Activated B cell treated with CpG ODN at 0.5 μM for 24 hours (primary cell): ENCODE measurements at regions of chr14 and their contacts with region 1.

Region 1: GRCh38 chr14:106622200-106622745 is 1095.9 kb downstream of the TMEM121 start:
- DNase-seq: no peak
- ATAC-seq: no peak
- H3K4me3 Mint-ChIP-seq: no peak overlapping the region
- H3K27ac Mint-ChIP-seq: no peak overlapping the region
- H3K4me1 Mint-ChIP-seq: peaks cover 9% of the 10 kb centered on the region
- H3K27me3 Mint-ChIP-seq: peaks cover 26% of the 10 kb centered on the region
- CTCF ChIP-seq: no peak

Region 2: DNA sequence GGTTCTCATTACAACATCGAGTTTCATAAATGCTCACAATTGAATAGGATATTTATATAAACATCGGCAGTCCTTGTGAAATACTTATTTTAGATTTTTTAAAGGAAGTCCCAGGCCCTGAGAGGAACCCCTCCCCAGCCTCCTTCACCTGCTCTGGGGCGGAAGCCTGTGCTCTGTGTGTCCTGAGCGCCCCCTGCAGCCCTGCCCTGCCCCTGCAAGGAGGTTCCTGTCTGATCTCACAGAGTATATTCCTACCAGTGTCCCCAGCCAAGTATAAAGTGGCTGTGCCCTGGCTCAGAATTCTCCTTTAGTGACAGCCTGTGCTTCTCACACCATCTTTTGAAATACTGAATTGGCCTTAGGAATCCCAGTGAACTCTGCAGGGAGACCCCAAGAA is 436.4 kb before region 1 on chr14:
- CTCF ChIA-PET with region 1: no interaction called
- POLR2A ChIA-PET with region 1: no interaction called
- intact Hi-C with region 1: no loop called
- DNase-seq: no peak
- ATAC-seq: peak; percentile 60
- H3K4me3 Mint-ChIP-seq: no peak overlapping the region
- H3K27ac Mint-ChIP-seq: no peak overlapping the region
- H3K4me1 Mint-ChIP-seq: peaks cover 5% of the 10 kb centered on the region
- H3K27me3 Mint-ChIP-seq: peaks cover 7% of the 10 kb centered on the region
- CTCF ChIP-seq: no peak

Region 3: DNA sequence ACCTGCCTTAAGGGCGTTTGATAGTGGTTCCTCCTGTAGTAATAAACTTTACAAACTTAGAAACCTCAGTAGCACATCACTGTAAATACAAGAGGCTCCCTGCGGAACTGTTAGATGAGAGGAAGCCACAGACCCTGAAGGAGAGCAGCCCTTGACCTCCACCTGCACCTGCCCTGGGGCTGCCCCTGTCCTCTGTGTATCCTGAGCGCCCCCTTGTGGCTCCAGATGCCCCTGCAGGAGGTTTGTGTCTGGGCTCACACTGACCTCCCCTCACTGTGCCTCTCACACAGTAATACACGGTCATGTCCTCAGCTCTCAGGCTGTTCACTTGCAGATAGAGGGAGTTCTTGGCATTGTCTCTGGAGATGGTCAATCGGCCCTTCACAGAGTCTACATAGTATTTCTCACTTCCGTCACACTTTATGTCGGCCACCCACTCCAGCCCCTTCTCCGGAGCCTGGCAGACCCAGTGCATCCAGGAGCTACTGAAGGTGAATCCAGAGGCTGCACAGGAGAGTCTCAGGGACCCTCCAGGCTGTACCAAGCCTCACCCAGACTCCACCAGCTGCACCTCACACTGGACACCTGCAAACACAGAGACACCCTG is 36.1 kb before region 1 on chr14:
- CTCF ChIA-PET with region 1: interaction called, 5 read pairs
- POLR2A ChIA-PET with region 1: no interaction called
- intact Hi-C with region 1: loop called (anchors 5 kb)
- DNase-seq: peak; percentile 60
- ATAC-seq: peak; percentile 95
- H3K4me3 Mint-ChIP-seq: no peak overlapping the region
- H3K27ac Mint-ChIP-seq: no peak overlapping the region
- H3K4me1 Mint-ChIP-seq: peaks cover 36% of the 10 kb centered on the region
- H3K27me3 Mint-ChIP-seq: no peaks in the 10 kb centered on the region
- CTCF ChIP-seq: no peak

Region 4: GRCh38 chr14:106605548-106606448 is 16.5 kb before region 1 on chr14:
- CTCF ChIA-PET with region 1: interaction called, 10 read pairs
- POLR2A ChIA-PET with region 1: no interaction called
- intact Hi-C with region 1: no loop called
- DNase-seq: peak; percentile 79
- ATAC-seq: peak; percentile 100
- H3K4me3 Mint-ChIP-seq: no peak overlapping the region
- H3K27ac Mint-ChIP-seq: no peak overlapping the region
- H3K4me1 Mint-ChIP-seq: peaks cover 6% of the 10 kb centered on the region
- H3K27me3 Mint-ChIP-seq: peaks cover 28% of the 10 kb centered on the region
- CTCF ChIP-seq: no peak